ENCODE measurements at regions of chr18 and their contacts with region 1.

Region 1: GRCh38 chr18:55110436-55110835 is 151.2 kb upstream of the CCDC68 start:
- DNase-seq: no peak

Region 2: DNA sequence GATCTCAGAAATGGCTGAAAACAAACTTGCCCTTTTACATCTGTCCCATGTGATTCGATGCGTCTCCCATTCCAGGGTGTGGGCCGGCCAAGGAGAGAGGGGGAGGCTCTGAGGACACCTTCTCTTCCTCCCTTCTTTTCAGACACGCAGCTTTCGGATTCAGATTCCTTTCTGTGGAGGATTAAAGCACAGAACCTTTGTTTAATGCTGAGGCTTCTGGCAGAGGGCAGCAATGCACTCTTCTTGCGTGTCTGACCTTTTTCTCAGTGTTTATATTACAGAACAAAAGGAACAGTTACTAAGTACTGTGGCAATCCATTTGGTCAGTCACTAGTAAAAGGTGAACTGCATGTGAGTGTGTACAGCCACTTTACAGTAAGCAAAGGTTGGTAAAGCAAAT is 117.8 kb after region 1 on chr18:
- intact Hi-C with region 1: loop called (anchors 5 kb)
- DNase-seq: no peak